CD4-positive, alpha-beta memory T cell (primary cell): ENCODE measurements at regions of chr12 and their contacts with region 1.

Region 1: DNA sequence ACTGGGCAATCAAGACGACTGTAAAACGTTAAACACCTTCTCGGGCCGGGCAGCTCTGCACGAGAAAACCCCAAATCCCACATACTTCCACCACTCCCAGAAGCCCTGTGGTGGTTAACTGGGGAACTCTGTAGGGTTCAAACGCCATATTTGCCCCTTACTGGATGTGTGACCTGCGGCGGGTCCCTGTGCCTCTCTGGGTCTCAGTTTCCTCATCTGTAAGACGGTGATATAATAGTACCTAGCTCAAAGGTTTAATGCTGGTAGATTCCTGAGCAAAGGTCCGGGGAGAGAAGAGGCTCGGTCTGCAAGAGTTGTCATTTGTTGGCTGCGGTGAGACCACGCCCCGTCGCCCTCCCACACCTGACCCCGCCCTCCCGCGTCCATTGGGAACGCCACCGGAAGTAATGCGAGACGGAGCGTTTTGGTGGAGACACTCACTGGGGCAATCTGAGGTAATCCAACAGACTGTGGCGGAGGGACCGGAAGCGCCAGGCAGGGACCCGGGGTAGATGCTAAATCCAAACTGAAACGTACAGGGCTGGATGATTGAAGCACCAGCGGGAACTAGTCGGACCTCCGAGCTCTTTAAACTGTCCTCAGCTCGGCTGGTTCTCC is 661 bp upstream of the OGFOD2 start:
- DNase-seq: peak; percentile 97 to 99 (median 98)
- H3K4me3 ChIP-seq: peak overlapping the region; percentile 71 to 100
- H3K4me3 Mint-ChIP-seq: peak overlapping the region; percentile 89 to 99 (median 98)
- H3K27ac ChIP-seq: peak overlapping the region; percentile 98
- H3K27ac Mint-ChIP-seq: peak overlapping the region; percentile 98 to 100 (median 99)
- H3K4me1 ChIP-seq: peaks cover 41% of the 10 kb centered on the region
- H3K4me1 Mint-ChIP-seq: peaks cover 10 to 49% (median 30%) of the 10 kb centered on the region in 4 donors
- H3K27me3 ChIP-seq: no peaks in the 10 kb centered on the region
- H3K27me3 Mint-ChIP-seq: no peaks in the 10 kb centered on the region

Region 2: GRCh38 chr12:122526683-122527477 is 447.5 kb before region 1 on chr12 and contains the starts of genes KNTC1 and RSRC2:
- CTCF ChIA-PET with region 1: no interaction called
- POLR2A ChIA-PET with region 1: no interaction called
- intact Hi-C with region 1: loop called (anchors 10 kb)
- DNase-seq: peak; percentile 98 to 99 (median 99)
- H3K4me3 ChIP-seq: peak within 1 kb of the TSS; percentile 85 to 88
- H3K4me3 Mint-ChIP-seq: no peak within 1 kb of the TSS
- H3K27ac ChIP-seq: peak within 1 kb of the TSS; percentile 98
- H3K27ac Mint-ChIP-seq: no peak within 1 kb of the TSS
- H3K4me1 ChIP-seq: peaks cover 52% of the 10 kb centered on the region
- H3K4me1 Mint-ChIP-seq: peaks cover 22 to 37% (median 30%) of the 10 kb centered on the region in 4 donors
- H3K27me3 ChIP-seq: no peaks in the 10 kb centered on the region
- H3K27me3 Mint-ChIP-seq: no peaks in the 10 kb centered on the region
- total RNA-seq, gene KNTC1: 29.7 to 30.9 TPM
- total RNA-seq, gene RSRC2: 138 to 141 TPM

Region 3: GRCh38 chr12:122871851-122872780 is 102.3 kb before region 1 on chr12:
- CTCF ChIA-PET with region 1: no interaction called
- POLR2A ChIA-PET with region 1: interaction called, 12 read pairs
- intact Hi-C with region 1: no loop called
- DNase-seq: peak in 3 of 5 donors; percentile 34 to 40 (median 39)
- H3K4me3 ChIP-seq: peak overlapping the region; percentile 25 to 41
- H3K4me3 Mint-ChIP-seq: peak overlapping the region; percentile 84 to 94 (median 91)
- H3K27ac ChIP-seq: peak overlapping the region; percentile 47
- H3K27ac Mint-ChIP-seq: peak overlapping the region; percentile 62 to 97 (median 94)
- H3K4me1 ChIP-seq: peaks cover 70% of the 10 kb centered on the region
- H3K4me1 Mint-ChIP-seq: peaks cover 48 to 82% (median 63%) of the 10 kb centered on the region in 4 donors
- H3K27me3 ChIP-seq: no peaks in the 10 kb centered on the region
- H3K27me3 Mint-ChIP-seq: no peaks in the 10 kb centered on the region

Region 4: GRCh38 chr12:122895705-122896636 is 78.4 kb before region 1 on chr12 and contains the start of gene VPS37B:
- CTCF ChIA-PET with region 1: interaction called, 4 read pairs
- POLR2A ChIA-PET with region 1: interaction called, 31 read pairs
- intact Hi-C with region 1: loop called (anchors 2 kb)
- DNase-seq: peak; percentile 91 to 96 (median 93)
- H3K4me3 ChIP-seq: peak within 1 kb of the TSS; percentile 54 to 79
- H3K4me3 Mint-ChIP-seq: peak within 1 kb of the TSS; percentile 88 to 97 (median 92)
- H3K27ac ChIP-seq: peak within 1 kb of the TSS; percentile 86
- H3K27ac Mint-ChIP-seq: peak within 1 kb of the TSS; percentile 93 to 100 (median 100)
- H3K4me1 ChIP-seq: peaks cover 89% of the 10 kb centered on the region
- H3K4me1 Mint-ChIP-seq: peaks cover 60 to 92% (median 78%) of the 10 kb centered on the region in 4 donors
- H3K27me3 ChIP-seq: no peaks in the 10 kb centered on the region
- H3K27me3 Mint-ChIP-seq: no peaks in the 10 kb centered on the region
- total RNA-seq, gene VPS37B: 22.8 to 23.7 TPM

Region 5: GRCh38 chr12:123150744-123151456 is 176.5 kb after region 1 on chr12 and contains the start of gene PITPNM2:
- CTCF ChIA-PET with region 1: no interaction called
- POLR2A ChIA-PET with region 1: interaction called, 3 read pairs
- intact Hi-C with region 1: loop called (anchors 2 kb)
- DNase-seq: peak; percentile 49 to 67 (median 63)
- H3K4me3 ChIP-seq: peak within 1 kb of the TSS; percentile 44 to 52
- H3K4me3 Mint-ChIP-seq: peak within 1 kb of the TSS; percentile 80 to 89 (median 86)
- H3K27ac ChIP-seq: peak within 1 kb of the TSS; percentile 34
- H3K27ac Mint-ChIP-seq: peak within 1 kb of the TSS; percentile 51 to 86 (median 73)
- H3K4me1 ChIP-seq: peaks cover 23% of the 10 kb centered on the region
- H3K4me1 Mint-ChIP-seq: peaks cover 17 to 41% (median 25%) of the 10 kb centered on the region in 4 donors
- H3K27me3 ChIP-seq: no peaks in the 10 kb centered on the region
- H3K27me3 Mint-ChIP-seq: no peaks in the 10 kb centered on the region
- total RNA-seq, gene PITPNM2: 15.7 to 16.8 TPM

Region 6: GRCh38 chr12:123601602-123602489 is 627.5 kb after region 1 on chr12 and contains the start of gene DDX55:
- CTCF ChIA-PET with region 1: no interaction called
- POLR2A ChIA-PET with region 1: interaction called, 8 read pairs
- intact Hi-C with region 1: loop called (anchors 1 kb)
- DNase-seq: peak; percentile 84 to 87 (median 86)
- H3K4me3 ChIP-seq: peak within 1 kb of the TSS; percentile 97 to 99
- H3K4me3 Mint-ChIP-seq: peak within 1 kb of the TSS; percentile 90 to 99 (median 96)
- H3K27ac ChIP-seq: peak within 1 kb of the TSS; percentile 92
- H3K27ac Mint-ChIP-seq: peak within 1 kb of the TSS; percentile 91 to 96 (median 95)
- H3K4me1 ChIP-seq: peaks cover 27% of the 10 kb centered on the region
- H3K4me1 Mint-ChIP-seq: peaks cover 18 to 42% (median 29%) of the 10 kb centered on the region in 4 donors
- H3K27me3 ChIP-seq: no peaks in the 10 kb centered on the region
- H3K27me3 Mint-ChIP-seq: no peaks in the 10 kb centered on the region
- total RNA-seq, gene DDX55: 50.5 to 58.7 TPM